CD8-positive, alpha-beta T cell (primary cell): ENCODE measurements at regions of chr3 and their contacts with region 1.

Region 1: DNA sequence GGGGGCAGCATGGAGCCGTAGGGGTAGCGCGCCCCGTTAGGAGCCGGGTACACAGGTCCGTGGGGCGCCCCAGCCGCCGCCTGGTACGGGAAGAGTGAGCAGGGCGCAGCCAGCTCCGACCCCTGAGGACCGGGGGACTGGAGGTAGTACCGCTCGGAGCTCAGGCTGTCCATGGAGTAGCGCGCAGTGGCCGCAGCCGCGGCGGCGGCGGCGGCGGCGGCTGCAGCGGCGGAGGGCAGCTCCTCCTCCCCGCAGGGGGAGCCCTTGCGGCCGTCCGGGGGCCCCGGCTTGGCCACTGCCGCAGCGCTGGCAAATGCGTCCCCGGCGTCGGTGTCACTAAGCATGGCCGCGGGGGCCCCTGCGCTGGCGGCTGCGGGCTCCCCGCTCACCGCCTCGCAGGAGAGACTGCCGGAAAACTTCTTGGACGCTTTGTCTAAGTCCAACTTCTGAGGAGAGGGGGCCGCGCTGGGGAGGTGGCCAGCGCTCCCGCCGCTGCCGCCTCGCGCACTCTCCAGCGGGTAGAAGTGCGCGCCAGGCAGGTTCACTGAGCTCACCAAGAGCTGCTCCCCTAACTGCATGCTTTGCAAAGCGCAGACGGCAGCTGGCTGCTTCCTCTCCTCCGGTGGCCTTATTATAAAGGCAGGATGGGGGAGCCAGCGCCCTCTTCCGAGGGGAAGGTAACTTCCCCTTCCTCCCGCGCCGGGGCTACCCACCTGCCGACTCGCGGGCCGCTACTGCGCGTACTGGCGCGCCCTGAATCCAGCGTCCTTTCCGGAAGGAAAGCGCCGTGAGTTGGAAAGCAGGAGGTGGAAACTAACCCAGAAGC is at the start of gene EOMES:
- DNase-seq: peak; percentile 58 to 91 (median 78)
- ATAC-seq: peak; percentile 77
- H3K4me3 ChIP-seq: peak within 1 kb of the TSS; percentile 73 to 94
- H3K4me3 Mint-ChIP-seq: peak within 1 kb of the TSS; percentile 93
- H3K27ac ChIP-seq: peak within 1 kb of the TSS; percentile 50 to 74
- H3K27ac Mint-ChIP-seq: peak within 1 kb of the TSS; percentile 77
- H3K4me1 ChIP-seq: peaks cover 26% of the 10 kb centered on the region
- H3K4me1 Mint-ChIP-seq: peaks cover 51% of the 10 kb centered on the region
- H3K27me3 ChIP-seq: peaks cover 14 to 37% of the 10 kb centered on the region in 2 experiments
- H3K27me3 Mint-ChIP-seq: peaks cover 36% of the 10 kb centered on the region
- CTCF ChIP-seq: peak; percentile 38
- total RNA-seq, gene EOMES: 8.6 to 8.9 TPM

Region 2: GRCh38 chr3:27165321-27165721 is 556.6 kb before region 1 on chr3:
- CTCF ChIA-PET with region 1: no interaction called
- POLR2A ChIA-PET with region 1: no interaction called
- intact Hi-C with region 1: no loop called
- DNase-seq: no peak
- ATAC-seq: no peak
- H3K4me3 ChIP-seq: no peak overlapping the region
- H3K4me3 Mint-ChIP-seq: no peak overlapping the region
- H3K27ac ChIP-seq: no peak overlapping the region
- H3K27ac Mint-ChIP-seq: no peak overlapping the region
- H3K4me1 ChIP-seq: no peaks in the 10 kb centered on the region
- H3K4me1 Mint-ChIP-seq: no peaks in the 10 kb centered on the region
- H3K27me3 ChIP-seq: no peaks in the 10 kb centered on the region
- H3K27me3 Mint-ChIP-seq: no peaks in the 10 kb centered on the region
- CTCF ChIP-seq: no peak

Region 3: GRCh38 chr3:27340534-27340933 is 381.4 kb before region 1 on chr3:
- CTCF ChIA-PET with region 1: no interaction called
- POLR2A ChIA-PET with region 1: no interaction called
- intact Hi-C with region 1: no loop called
- DNase-seq: no peak
- ATAC-seq: no peak
- H3K4me3 ChIP-seq: no peak overlapping the region
- H3K4me3 Mint-ChIP-seq: no peak overlapping the region
- H3K27ac ChIP-seq: no peak overlapping the region
- H3K27ac Mint-ChIP-seq: no peak overlapping the region
- H3K4me1 ChIP-seq: no peaks in the 10 kb centered on the region
- H3K4me1 Mint-ChIP-seq: peaks cover 3% of the 10 kb centered on the region
- H3K27me3 ChIP-seq: peaks cover 0 to 2% of the 10 kb centered on the region in 2 experiments
- H3K27me3 Mint-ChIP-seq: no peaks in the 10 kb centered on the region
- CTCF ChIP-seq: no peak

Region 4: DNA sequence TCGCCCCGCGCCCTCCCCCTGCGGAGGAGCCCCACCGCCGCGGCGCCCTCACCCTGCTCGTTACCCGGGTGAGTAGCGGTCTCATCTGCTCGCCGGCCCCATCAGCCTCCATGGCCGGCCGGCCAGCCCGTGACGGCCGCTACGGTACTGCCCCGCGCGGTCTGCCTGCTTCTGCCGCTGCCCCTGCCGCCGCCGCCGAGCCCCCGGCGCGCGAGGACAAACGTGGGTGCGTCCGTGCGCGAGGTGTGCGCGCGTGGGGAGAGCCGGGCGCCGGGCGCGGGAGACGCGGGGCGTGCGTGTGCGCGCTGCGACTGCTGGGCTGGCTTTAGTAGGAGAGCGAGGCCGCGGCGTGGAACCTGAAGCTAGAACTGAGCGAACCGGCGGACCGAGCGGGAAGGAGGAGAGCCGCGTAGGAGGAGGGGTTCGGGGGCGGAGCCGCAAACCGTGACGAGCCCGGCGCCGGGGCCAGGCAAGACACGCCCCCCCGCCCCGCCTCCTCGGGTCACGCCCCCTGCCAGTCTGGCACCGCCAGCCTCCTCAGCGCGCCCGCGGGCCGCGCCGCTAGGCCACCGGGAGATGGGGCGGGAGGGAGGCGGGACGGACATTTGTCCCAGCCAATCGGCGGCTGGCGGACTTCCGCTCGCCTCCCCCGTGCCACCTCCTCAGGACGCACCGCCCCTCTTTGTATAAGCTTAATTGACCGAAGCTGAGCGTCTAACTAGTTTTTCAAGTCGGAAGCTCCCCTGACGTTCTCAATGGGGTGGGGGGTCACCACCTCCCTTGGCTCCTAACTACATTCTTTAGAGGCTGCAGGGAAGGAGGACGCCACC is 237.7 kb before region 1 on chr3 and contains the start of gene SLC4A7:
- CTCF ChIA-PET with region 1: no interaction called
- POLR2A ChIA-PET with region 1: no interaction called
- intact Hi-C with region 1: loop called in 1 of 2 experiments (anchors 2 kb)
- DNase-seq: peak; percentile 96 to 100 (median 99)
- ATAC-seq: peak; percentile 89
- H3K4me3 ChIP-seq: peak within 1 kb of the TSS; percentile 69 to 91
- H3K4me3 Mint-ChIP-seq: peak within 1 kb of the TSS; percentile 100
- H3K27ac ChIP-seq: peak within 1 kb of the TSS; percentile 75 to 84
- H3K27ac Mint-ChIP-seq: peak within 1 kb of the TSS; percentile 97
- H3K4me1 ChIP-seq: peaks cover 33% of the 10 kb centered on the region
- H3K4me1 Mint-ChIP-seq: peaks cover 41% of the 10 kb centered on the region
- H3K27me3 ChIP-seq: no peaks in the 10 kb centered on the region
- H3K27me3 Mint-ChIP-seq: no peaks in the 10 kb centered on the region
- CTCF ChIP-seq: no peak
- total RNA-seq, gene SLC4A7: 19.4 to 19.6 TPM

Region 5: GRCh38 chr3:27521179-27521871 is 200.6 kb before region 1 on chr3:
- CTCF ChIA-PET with region 1: no interaction called
- POLR2A ChIA-PET with region 1: no interaction called
- intact Hi-C with region 1: no loop called
- DNase-seq: peak in 1 of 9 experiments; percentile 28
- ATAC-seq: no peak
- H3K4me3 ChIP-seq: no peak overlapping the region
- H3K4me3 Mint-ChIP-seq: no peak overlapping the region
- H3K27ac ChIP-seq: no peak overlapping the region
- H3K27ac Mint-ChIP-seq: no peak overlapping the region
- H3K4me1 ChIP-seq: no peaks in the 10 kb centered on the region
- H3K4me1 Mint-ChIP-seq: no peaks in the 10 kb centered on the region
- H3K27me3 ChIP-seq: no peaks in the 10 kb centered on the region
- H3K27me3 Mint-ChIP-seq: no peaks in the 10 kb centered on the region
- CTCF ChIP-seq: no peak

Region 6: DNA sequence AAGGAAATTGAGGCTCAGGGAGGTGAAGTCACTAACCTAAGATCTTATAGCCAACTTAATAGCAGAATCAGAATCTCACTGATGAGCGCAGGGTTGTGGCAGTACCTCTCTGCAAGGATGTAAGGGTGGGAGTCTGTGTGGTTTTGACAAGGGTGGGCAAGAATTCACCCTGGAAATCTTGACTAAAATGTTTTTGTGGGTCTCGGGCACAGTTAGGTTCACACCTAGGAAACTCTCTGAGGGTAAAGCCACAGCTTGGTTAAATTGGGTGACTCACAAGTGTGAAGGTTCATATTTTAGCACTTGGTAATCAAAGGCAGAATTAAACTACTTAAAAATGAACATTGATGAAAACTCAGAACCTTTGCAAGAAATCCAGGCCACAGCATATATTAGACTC is 178.4 kb after region 1 on chr3:
- CTCF ChIA-PET with region 1: no interaction called
- POLR2A ChIA-PET with region 1: interaction called, 3 read pairs
- intact Hi-C with region 1: loop called in 1 of 2 experiments (anchors 1 kb)
- DNase-seq: peak in 7 of 9 experiments; percentile 9 to 80 (median 47)
- ATAC-seq: peak; percentile 81
- H3K4me3 ChIP-seq: no peak overlapping the region
- H3K4me3 Mint-ChIP-seq: no peak overlapping the region
- H3K27ac ChIP-seq: peak overlapping the region in 1 of 2 experiments; percentile 31
- H3K27ac Mint-ChIP-seq: peak overlapping the region; percentile 15
- H3K4me1 ChIP-seq: peaks cover 46% of the 10 kb centered on the region
- H3K4me1 Mint-ChIP-seq: peaks cover 67% of the 10 kb centered on the region
- H3K27me3 ChIP-seq: no peaks in the 10 kb centered on the region
- H3K27me3 Mint-ChIP-seq: no peaks in the 10 kb centered on the region
- CTCF ChIP-seq: no peak

Region 7: DNA sequence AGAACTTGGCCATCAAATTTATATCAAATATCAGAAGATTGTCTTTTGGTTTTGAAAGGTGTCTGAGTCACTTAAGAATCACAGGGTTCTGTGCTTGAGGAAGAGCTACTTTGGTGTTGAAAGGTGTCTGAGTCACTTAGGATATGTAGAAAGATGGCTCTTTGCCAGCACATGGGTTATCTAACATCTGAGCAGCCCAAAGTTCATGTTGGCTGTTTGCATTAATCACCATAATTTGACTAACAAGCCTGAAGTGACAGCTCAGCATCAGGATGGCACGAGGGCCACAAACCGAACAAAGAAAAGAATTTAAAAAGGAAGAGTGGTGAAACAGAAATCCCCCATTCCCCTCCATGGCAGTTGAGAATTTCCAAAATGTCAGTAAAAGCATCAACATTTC is 329.0 kb after region 1 on chr3:
- CTCF ChIA-PET with region 1: interaction called, 5 read pairs
- POLR2A ChIA-PET with region 1: no interaction called
- intact Hi-C with region 1: loop called in 1 of 2 experiments (anchors 5 kb)
- DNase-seq: peak in 7 of 9 experiments; percentile 2 to 70 (median 31)
- ATAC-seq: peak; percentile 79
- H3K4me3 ChIP-seq: no peak overlapping the region
- H3K4me3 Mint-ChIP-seq: no peak overlapping the region
- H3K27ac ChIP-seq: no peak overlapping the region
- H3K27ac Mint-ChIP-seq: no peak overlapping the region
- H3K4me1 ChIP-seq: no peaks in the 10 kb centered on the region
- H3K4me1 Mint-ChIP-seq: peaks cover 17% of the 10 kb centered on the region
- H3K27me3 ChIP-seq: no peaks in the 10 kb centered on the region
- H3K27me3 Mint-ChIP-seq: no peaks in the 10 kb centered on the region
- CTCF ChIP-seq: no peak

Region 8: DNA sequence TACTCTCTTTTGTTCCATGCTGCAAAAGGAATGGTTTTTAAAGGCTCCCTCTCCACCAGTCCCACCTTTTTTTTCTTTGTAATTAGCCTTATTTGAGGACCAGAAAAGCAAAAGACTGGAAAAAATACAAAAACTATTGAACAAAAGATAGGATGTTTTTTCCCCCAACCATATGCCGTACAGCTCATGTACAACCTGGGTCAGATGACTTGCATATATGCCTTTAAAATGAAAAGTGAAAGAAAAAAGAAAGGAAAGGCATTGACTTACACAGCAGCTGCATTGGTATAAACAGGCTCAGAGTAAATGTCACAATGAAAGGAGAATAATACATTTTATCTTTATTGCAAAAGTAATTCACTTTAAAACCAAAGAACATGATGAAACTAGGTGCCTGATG is 450.0 kb after region 1 on chr3:
- CTCF ChIA-PET with region 1: interaction called, 18 read pairs
- POLR2A ChIA-PET with region 1: interaction called, 5 read pairs
- intact Hi-C with region 1: no loop called
- DNase-seq: peak in 2 of 9 experiments; percentile 32 to 57
- ATAC-seq: peak; percentile 71
- H3K4me3 ChIP-seq: peak overlapping the region in 1 of 2 experiments; percentile 38
- H3K4me3 Mint-ChIP-seq: peak overlapping the region; percentile 57
- H3K27ac ChIP-seq: peak overlapping the region; percentile 17 to 29
- H3K27ac Mint-ChIP-seq: peak overlapping the region; percentile 79
- H3K4me1 ChIP-seq: peaks cover 15% of the 10 kb centered on the region
- H3K4me1 Mint-ChIP-seq: peaks cover 17% of the 10 kb centered on the region
- H3K27me3 ChIP-seq: no peaks in the 10 kb centered on the region
- H3K27me3 Mint-ChIP-seq: no peaks in the 10 kb centered on the region
- CTCF ChIP-seq: no peak

Region 9: DNA sequence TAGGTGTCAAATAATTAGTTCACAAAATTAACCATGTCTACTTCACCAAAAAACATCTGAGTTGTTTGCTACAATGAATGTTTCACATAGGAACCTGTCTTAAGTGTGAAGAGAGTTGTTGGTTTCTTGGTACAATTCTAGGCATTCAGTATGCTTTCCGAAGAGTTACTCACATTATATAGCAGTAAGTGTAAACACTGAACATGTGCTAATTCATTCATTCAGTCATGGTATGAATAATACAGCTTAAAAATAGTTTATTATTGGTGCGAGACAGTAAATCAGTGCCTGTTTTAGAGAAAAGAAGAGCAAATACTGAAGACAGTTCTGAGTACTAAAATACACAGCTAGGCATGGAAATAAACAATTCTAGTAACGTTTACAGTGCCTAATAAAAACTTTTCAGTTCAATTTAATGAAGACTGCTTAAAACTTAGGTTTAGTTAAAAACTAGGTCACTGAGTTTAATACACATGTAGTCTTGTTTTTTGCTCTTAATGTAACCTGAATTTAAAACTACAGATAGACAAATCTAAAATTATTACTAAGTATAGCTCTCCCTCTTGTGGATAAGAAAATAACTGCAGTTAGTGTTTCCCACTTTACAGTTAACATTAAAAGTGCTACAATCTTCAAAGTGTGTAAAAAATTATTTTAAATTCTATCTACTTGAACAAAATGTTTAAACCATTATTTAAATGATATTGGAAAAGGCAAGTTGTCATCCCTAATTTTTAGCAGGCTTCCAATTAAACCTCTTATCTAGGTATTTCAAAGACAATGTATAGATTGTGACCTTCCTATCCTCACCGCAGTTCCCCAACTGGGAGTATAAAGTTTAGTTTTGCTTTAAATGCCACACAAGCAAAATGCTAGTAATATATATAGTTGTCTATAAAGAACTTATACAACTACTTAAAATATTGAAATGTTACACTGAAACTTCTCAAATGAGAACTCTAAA is 606.5 kb after region 1 on chr3:
- CTCF ChIA-PET with region 1: interaction called, 79 read pairs
- POLR2A ChIA-PET with region 1: interaction called, 28 read pairs
- intact Hi-C with region 1: no loop called
- DNase-seq: peak in 2 of 9 experiments; percentile 62 to 72
- ATAC-seq: peak; percentile 32
- H3K4me3 ChIP-seq: no peak overlapping the region
- H3K4me3 Mint-ChIP-seq: no peak overlapping the region
- H3K27ac ChIP-seq: peak overlapping the region in 1 of 2 experiments; percentile 21
- H3K27ac Mint-ChIP-seq: peak overlapping the region; percentile 72
- H3K4me1 ChIP-seq: peaks cover 13% of the 10 kb centered on the region
- H3K4me1 Mint-ChIP-seq: peaks cover 31% of the 10 kb centered on the region
- H3K27me3 ChIP-seq: no peaks in the 10 kb centered on the region
- H3K27me3 Mint-ChIP-seq: no peaks in the 10 kb centered on the region
- CTCF ChIP-seq: peak; percentile 83